ENCODE measurements at regions of chr7 and their contacts with region 1.

Region 1: DNA sequence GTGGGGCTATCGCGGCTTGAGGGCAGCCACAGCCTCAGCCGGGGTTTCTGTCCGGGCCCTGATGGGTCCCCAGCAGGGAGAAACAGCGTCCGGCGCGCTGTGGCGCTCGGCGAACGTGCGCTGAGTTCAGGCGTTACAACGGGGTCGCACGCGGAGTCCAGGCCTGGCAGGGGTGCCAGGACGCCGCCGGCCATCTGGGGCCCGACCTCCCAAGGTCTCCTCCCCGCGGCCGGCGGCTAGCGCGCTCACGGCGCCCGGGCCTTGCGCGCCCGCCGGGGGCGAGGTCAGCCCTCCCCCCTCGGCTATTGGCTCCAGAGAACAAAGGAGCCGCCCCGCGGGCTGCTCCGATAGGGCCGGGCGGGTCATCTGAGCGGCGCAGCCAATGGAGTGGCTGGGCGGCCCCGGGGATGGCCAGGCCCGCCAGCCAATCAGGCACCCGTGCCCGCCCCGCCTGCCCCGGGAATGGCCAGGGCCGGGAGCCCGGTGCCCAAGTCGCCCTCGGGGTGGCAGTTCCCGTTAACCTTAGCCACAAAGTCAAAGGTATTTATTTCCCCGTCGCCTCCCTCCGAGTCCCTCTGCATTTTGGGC is at the start of gene ZNF775:
- DNase-seq: peak; percentile 94
- H3K4me3 Mint-ChIP-seq: peak within 1 kb of the TSS; percentile 87
- H3K27ac Mint-ChIP-seq: peak within 1 kb of the TSS; percentile 77
- H3K4me1 Mint-ChIP-seq: peaks cover 47% of the 10 kb centered on the region
- H3K27me3 Mint-ChIP-seq: no peaks in the 10 kb centered on the region
- total RNA-seq, gene ZNF775: 4.5 to 5.2 TPM

Region 2: DNA sequence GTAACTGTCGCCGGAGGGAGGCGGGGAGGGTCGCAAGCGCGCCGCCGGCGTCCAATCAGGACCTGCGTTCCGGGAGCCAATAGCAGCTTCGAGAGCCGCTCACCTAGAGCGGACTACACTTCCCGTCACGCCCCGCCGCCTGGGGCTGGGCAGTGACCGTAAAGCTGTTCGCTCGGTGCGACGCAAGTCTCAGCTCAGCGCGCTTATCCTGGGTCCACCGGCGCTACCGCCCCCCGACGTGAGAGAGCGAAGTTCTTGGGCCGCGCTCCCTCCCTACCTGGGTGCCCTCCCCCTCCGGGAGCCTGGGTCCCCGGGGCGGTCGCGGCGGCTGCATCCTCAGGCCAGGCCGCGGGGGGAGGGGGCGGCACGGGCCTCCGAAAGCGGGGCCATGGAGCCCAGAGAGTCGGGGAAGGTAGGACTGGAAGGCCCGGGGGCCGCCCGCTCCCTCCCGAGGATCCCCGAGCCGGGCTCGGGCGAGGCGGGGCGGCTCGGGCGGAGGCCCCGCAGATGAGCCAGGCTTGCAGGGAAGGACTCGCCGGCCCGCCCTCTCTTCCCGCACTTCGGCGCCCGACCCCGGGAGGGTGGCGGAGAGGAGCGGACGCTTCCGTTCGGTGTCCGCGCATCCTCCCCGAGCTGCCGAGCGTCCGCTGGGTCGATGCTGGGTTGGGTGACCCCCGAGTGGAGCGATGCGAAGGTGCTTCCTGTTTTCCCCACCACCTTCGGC is 540.6 kb before region 1 on chr7 and contains the start of gene ZNF862:
- CTCF ChIA-PET with region 1: no interaction called
- intact Hi-C with region 1: loop called (anchors 1 kb)
- DNase-seq: peak; percentile 96
- H3K4me3 Mint-ChIP-seq: peak within 1 kb of the TSS; percentile 76
- H3K27ac Mint-ChIP-seq: peak within 1 kb of the TSS; percentile 80
- H3K4me1 Mint-ChIP-seq: peaks cover 26% of the 10 kb centered on the region
- H3K27me3 Mint-ChIP-seq: no peaks in the 10 kb centered on the region
- total RNA-seq, gene ZNF862: 17.6 to 19.4 TPM

Region 3: DNA sequence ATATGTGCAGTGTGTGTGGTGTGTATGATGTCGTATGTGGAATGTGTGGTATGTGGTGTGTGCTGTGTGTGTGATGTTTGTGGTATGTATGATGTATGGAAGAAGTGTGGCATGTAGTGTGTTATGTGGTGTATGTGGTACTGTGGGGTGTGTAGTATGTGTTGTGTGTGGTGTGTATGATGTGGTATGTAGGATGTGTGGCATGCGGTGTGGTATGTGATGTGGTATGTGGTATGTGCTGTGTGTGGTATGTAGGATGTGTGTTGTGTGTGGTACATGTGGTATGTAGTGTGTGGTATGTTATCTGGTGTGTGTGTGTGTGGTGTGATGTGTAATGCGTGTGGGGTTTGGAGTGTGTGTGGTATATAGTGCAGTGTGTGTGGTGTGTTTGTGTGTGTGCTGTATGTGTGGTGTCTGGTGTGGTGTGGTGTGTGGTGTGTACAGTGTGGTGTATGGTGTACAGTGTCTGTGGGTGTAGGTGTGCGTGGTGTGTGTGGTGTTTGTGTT is 375.6 kb before region 1 on chr7:
- CTCF ChIA-PET with region 1: no interaction called
- intact Hi-C with region 1: no loop called
- DNase-seq: no peak
- H3K4me3 Mint-ChIP-seq: no peak overlapping the region
- H3K27ac Mint-ChIP-seq: no peak overlapping the region
- H3K4me1 Mint-ChIP-seq: no peaks in the 10 kb centered on the region
- H3K27me3 Mint-ChIP-seq: no peaks in the 10 kb centered on the region

Region 4: GRCh38 chr7:150356265-150356897 is 22.6 kb before region 1 on chr7:
- CTCF ChIA-PET with region 1: interaction called, 10 read pairs
- intact Hi-C with region 1: loop called (anchors 1 kb)
- DNase-seq: peak; percentile 28
- H3K4me3 Mint-ChIP-seq: no peak overlapping the region
- H3K27ac Mint-ChIP-seq: no peak overlapping the region
- H3K4me1 Mint-ChIP-seq: peaks cover 40% of the 10 kb centered on the region
- H3K27me3 Mint-ChIP-seq: no peaks in the 10 kb centered on the region

Region 5: DNA sequence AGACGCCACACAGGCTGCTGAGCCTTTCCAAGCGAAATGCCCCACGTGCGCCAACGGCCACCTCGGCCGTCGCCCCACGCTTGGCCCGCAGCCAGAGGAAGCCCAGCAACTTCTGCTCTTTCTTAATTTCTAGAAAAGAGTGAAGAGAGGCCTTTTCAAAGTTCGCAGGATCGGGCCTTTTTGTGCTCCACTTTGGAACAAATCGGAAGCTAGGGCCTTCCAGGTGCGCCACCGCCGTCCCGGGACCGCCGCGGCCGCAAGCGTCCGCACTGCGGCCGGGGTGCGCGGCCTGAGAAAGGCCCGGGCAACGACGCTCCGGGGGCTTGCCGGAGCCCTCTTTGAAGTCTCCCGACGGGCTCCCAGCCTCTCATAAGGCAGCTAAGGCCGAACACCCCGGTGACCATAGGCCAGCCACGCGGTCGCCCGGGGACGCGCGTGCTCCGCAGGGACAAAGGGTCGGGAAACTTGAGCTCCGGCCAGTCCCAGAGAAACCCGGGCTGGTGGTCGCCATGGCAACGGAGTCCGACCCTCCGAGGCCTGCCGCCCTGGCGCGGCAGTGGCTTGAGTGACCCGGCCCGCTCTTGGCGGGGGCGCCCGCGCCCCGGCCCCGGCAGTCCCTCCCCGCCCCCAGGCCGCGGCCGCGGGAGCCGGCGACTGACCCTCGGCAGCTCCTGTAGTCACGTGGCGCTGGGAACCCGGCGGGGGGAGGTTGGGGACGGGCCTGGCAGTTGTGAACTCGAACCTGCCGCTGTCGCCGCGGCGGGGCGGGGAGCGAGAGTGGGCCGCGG is 10.7 kb before region 1 on chr7 and contains the start of gene REPIN1:
- CTCF ChIA-PET with region 1: interaction called, 8 read pairs
- intact Hi-C with region 1: loop called (anchors 1 kb)
- DNase-seq: peak; percentile 84
- H3K4me3 Mint-ChIP-seq: peak within 1 kb of the TSS; percentile 94
- H3K27ac Mint-ChIP-seq: peak within 1 kb of the TSS; percentile 95
- H3K4me1 Mint-ChIP-seq: peaks cover 45% of the 10 kb centered on the region
- H3K27me3 Mint-ChIP-seq: no peaks in the 10 kb centered on the region
- total RNA-seq, gene REPIN1: 45.7 to 49.3 TPM

Region 6: GRCh38 chr7:150404805-150405583 is 26.0 kb after region 1 on chr7:
- CTCF ChIA-PET with region 1: interaction called, 3 read pairs
- intact Hi-C with region 1: loop called (anchors 1 kb)
- DNase-seq: peak; percentile 76
- H3K4me3 Mint-ChIP-seq: peak overlapping the region; percentile 85
- H3K27ac Mint-ChIP-seq: peak overlapping the region; percentile 83
- H3K4me1 Mint-ChIP-seq: peaks cover 29% of the 10 kb centered on the region
- H3K27me3 Mint-ChIP-seq: no peaks in the 10 kb centered on the region

Region 7: DNA sequence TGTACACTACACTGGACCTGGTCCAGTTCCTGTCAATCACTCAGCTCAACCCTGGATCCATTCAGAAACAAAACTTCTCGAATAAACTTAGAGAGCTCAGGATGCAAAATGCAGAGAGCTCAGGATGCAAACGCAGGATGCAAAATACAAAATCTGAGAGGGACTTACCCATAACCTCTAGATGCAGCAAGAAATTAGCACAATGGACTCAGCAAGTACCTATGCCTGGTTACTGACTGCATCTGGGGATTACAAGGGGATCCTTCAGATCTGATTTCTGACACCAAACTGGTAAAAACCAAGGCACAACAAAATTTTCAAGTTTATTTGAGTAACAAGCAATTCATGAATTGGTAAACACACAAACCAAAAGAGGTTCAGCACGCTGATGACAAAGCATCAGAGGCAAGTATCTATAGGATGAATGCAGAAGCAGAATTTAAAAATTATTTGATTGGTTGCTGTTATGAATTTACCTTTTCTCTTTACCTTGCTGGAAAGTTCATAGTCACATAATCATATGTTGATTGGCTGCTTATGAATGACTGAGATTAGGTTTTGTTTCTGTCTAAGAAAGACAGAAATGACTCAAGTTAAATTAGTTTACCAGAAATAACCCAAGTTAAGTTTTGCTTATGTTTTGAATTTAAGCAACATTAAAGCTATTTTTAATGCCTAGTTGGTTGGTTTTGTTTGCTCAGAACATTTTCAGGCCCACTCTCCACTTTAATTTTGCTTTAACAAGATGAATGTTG is 241.8 kb after region 1 on chr7:
- CTCF ChIA-PET with region 1: no interaction called
- intact Hi-C with region 1: loop called (anchors 10 kb)
- DNase-seq: peak; percentile 10
- H3K4me3 Mint-ChIP-seq: peak overlapping the region; percentile 8
- H3K27ac Mint-ChIP-seq: peak overlapping the region; percentile 82
- H3K4me1 Mint-ChIP-seq: peaks cover 53% of the 10 kb centered on the region
- H3K27me3 Mint-ChIP-seq: no peaks in the 10 kb centered on the region

Region 8: DNA sequence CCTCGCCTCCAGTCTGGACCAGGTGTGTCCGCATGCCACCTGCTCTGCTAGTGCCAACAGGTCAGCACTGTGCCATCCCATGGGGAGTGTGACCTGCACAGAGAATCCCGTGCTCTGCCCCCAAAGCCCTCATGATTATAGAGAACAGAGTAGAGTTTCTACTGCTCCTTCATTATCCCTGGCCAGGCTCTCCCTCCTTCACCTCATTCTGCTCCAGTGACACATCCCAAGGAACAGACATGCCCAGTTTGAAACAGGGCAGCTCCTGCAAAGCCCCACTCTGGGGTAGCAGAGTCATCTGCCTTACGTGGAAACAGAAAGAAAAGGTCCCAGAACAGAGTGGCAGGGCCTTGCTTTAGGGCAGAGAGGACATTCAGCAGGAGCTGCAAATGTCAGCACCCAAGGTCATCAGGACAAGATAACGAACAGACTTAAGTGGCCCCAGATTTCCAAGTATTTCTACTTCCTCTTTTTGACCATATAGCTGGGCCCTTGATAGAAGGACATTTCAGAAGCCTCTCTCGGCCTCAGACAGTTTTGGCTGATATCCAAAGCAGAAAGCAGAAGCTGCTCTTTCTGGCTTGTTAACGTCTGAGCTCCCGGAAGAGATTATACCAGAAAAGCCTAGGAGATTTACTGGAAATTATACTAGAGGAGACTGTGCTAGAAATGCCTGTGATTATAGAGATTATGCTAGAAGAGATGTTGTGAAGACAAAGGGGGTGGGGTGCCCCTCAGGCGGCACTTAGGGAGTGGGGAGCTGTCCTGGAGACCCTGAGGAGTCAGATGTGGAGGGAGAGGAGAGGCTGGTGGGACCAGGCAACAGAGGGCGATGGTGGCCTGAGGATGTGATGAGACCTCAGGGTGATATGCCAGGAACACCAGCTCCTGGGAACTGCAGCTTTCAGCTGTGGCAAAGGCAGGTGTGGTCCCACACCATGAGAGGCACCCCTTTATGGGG is 408.7 kb after region 1 on chr7:
- CTCF ChIA-PET with region 1: no interaction called
- intact Hi-C with region 1: no loop called
- DNase-seq: no peak
- H3K4me3 Mint-ChIP-seq: no peak overlapping the region
- H3K27ac Mint-ChIP-seq: no peak overlapping the region
- H3K4me1 Mint-ChIP-seq: peaks cover 9% of the 10 kb centered on the region
- H3K27me3 Mint-ChIP-seq: peaks cover 2% of the 10 kb centered on the region

Region 9: GRCh38 chr7:151080522-151081169 is 701.7 kb after region 1 on chr7 and contains the start of gene FASTK:
- CTCF ChIA-PET with region 1: no interaction called
- intact Hi-C with region 1: loop called (anchors 10 kb)
- DNase-seq: peak; percentile 93
- H3K4me3 Mint-ChIP-seq: peak within 1 kb of the TSS; percentile 86
- H3K27ac Mint-ChIP-seq: peak within 1 kb of the TSS; percentile 73
- H3K4me1 Mint-ChIP-seq: peaks cover 36% of the 10 kb centered on the region
- H3K27me3 Mint-ChIP-seq: peaks cover 7% of the 10 kb centered on the region
- total RNA-seq, gene FASTK: 43.6 to 45.7 TPM

Measured in activated naive CD4-positive, alpha-beta T cell treated with anti-CD3 and anti-CD28 coated beads for 36 hours (primary cell).